ENCODE measurements at regions of chr18 and their contacts with region 1.

Region 1: DNA sequence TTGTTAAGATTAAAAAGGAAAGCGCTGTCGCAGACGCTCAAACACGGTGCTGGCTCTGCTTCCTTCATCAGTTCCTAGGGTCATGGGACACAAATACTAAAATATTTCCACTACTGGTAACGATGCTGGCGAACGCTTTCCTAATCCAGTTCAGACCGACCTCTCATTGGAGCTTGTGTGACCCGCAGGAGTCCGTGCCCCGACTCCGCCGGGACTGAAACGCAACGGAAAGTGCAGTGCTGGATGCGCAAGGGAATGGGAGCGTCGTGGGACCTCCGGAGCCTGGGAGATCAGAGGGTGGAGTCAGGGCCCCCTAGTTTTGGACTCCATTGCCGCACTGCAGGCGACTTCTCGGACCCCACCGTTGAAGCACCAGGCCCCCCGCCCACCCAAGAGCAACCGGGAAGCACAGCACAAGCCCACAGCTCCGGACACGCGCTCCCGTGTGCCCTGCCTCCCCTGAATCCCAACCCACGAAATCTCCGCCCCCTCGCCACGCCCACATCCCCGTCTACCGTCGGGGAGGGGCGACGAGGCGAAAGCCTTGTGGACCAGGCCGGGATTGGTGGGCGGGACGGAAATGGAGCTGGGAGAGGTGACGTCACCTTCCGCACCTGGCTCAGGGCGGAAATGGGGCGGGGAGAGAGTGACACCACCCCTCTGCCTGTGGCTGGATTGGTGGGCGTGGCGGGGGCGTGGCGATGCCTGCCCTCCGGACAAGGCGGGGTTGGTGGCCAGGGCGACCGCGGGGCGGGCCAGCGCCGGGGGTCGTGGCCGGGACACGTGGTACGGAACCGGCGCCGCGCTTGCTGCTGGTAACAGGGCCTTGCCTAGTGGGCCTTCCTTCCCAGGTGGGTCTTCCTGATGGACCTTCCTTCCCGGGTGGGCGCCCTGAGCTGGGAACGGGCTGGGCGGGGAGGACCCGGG is at the start of gene CNDP2:
- DNase-seq: peak; percentile 98 to 99 (median 99)
- H3K4me3 ChIP-seq: peak within 1 kb of the TSS; percentile 81 to 96 (median 82)
- H3K27ac ChIP-seq: peak within 1 kb of the TSS; percentile 74 to 91
- H3K4me1 ChIP-seq: peaks cover 15 to 46% (median 35%) of the 10 kb centered on the region in 4 experiments
- H3K27me3 ChIP-seq: no peaks in the 10 kb centered on the region

Region 2: DNA sequence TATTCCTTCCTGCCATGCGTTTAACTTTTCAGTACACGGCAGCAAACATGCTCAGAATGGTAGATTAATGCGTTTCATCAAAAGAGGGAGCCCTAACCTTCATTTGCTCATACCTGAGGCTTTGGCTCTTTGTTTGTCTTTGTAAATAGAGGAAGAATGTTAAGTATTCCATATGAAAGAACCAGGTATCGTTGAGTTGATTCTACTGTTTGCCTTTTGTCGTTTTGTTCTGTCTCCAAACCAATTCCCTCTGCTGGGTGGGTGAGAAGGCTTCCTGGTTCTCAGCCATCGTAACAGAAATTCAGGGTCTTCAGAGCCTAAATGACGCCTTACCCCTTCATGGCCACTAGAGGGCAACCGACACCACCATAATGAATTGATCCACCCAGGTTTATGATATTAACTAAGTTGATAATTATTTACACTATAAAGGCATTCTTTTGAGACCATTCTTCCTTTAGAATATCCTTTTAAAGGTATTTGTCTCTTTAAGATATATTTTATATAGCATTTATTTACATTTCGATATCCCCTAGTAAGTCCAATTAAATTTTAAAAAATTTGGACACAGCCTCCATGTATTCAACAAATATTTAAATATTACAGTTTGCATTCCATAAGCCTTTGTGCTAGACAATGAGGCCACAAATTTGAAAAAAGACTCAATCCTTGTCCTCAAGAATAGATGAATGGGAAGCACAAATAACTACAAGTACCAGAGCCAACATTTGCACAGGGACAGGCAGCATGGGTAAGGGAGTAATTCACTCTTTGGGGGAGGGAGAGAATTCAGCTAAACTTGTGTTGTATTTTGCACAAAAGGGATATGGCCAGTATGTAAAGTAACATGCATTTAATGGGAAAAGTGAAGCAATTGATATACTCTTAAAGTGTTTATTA is 299.4 kb before region 1 on chr18:
- CTCF ChIA-PET with region 1: interaction called, 15 read pairs
- POLR2A ChIA-PET with region 1: no interaction called
- DNase-seq: peak; percentile 70 to 88 (median 85)
- H3K4me3 ChIP-seq: peak overlapping the region in 6 of 7 experiments; percentile 44 to 81 (median 56)
- H3K27ac ChIP-seq: peak overlapping the region in 1 of 2 experiments; percentile 45
- H3K4me1 ChIP-seq: peaks cover 0 to 3% (median 0%) of the 10 kb centered on the region in 4 experiments
- H3K27me3 ChIP-seq: peaks cover 0 to 7% (median 5%) of the 10 kb centered on the region in 5 experiments

Region 3: GRCh38 chr18:74353169-74353775 is 142.6 kb before region 1 on chr18:
- CTCF ChIA-PET with region 1: interaction called, 102 read pairs
- POLR2A ChIA-PET with region 1: interaction called, 4 read pairs
- DNase-seq: peak; percentile 72 to 81 (median 74)
- H3K4me3 ChIP-seq: no peak overlapping the region
- H3K27ac ChIP-seq: no peak overlapping the region
- H3K4me1 ChIP-seq: peaks cover 0 to 9% (median 1%) of the 10 kb centered on the region in 4 experiments
- H3K27me3 ChIP-seq: no peaks in the 10 kb centered on the region

Region 4: DNA sequence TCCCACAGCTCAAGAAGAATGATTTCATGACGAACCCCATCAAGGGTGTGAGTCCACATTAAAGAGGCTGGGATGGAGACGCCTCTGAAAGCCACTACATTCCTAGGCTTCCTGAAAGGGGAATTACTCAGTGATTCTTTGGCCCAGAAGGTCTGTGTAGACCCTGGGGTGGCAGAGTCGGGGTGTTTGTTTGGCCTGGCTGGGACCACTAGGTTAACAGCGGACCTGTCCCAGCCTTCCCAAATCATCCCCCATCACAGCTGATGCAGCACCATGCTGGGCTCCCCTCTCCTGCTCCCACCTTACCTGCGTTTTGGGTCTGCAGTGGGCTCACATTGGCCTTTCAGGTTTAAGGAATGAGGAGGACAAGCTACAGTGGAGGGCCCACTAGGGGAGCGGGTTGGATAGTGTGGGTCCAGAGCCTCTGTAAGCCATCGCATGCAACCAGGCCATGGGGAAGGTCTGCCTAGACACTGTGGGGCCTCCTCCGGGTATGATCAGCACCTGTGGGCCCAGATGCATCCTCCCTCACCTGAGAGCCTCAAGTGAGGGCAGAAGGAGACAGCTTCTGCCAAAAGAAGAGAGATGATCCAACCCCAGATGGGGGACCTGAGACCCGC is 54.9 kb before region 1 on chr18:
- CTCF ChIA-PET with region 1: no interaction called
- POLR2A ChIA-PET with region 1: no interaction called
- DNase-seq: no peak
- H3K4me3 ChIP-seq: no peak overlapping the region
- H3K27ac ChIP-seq: no peak overlapping the region
- H3K4me1 ChIP-seq: no peaks in the 10 kb centered on the region
- H3K27me3 ChIP-seq: peaks cover 0 to 5% (median 2%) of the 10 kb centered on the region in 5 experiments

Region 5: DNA sequence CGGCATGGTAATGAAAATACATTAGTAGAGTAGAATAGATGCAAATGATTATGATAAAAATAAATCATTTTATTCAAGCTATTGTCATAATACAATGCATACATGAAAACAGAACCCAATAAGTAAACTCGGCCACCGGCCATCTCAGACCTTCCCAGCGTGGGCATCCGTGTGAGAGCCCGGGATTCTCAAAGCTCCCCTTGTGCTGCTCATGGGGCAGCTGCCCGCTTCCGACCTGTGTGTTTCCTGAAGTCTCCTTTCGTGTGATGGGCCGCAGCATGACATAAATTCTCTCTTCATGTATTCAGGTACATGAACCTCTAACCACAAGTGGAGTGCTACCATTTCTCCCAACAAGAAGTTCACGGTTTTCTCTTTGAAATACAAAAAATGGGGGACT is 13.1 kb before region 1 on chr18:
- CTCF ChIA-PET with region 1: interaction called, 10 read pairs
- POLR2A ChIA-PET with region 1: no interaction called
- DNase-seq: no peak
- H3K4me3 ChIP-seq: no peak overlapping the region
- H3K27ac ChIP-seq: no peak overlapping the region
- H3K4me1 ChIP-seq: peaks cover 5 to 19% (median 16%) of the 10 kb centered on the region in 4 experiments
- H3K27me3 ChIP-seq: peaks cover 0 to 2% (median 0%) of the 10 kb centered on the region in 5 experiments

Region 6: GRCh38 chr18:74613381-74613780 is 117.5 kb after region 1 on chr18:
- CTCF ChIA-PET with region 1: no interaction called
- POLR2A ChIA-PET with region 1: no interaction called
- DNase-seq: no peak
- H3K4me3 ChIP-seq: no peak overlapping the region
- H3K27ac ChIP-seq: no peak overlapping the region
- H3K4me1 ChIP-seq: no peaks in the 10 kb centered on the region
- H3K27me3 ChIP-seq: no peaks in the 10 kb centered on the region